ENCODE measurements at regions of chr6 and their contacts with region 1.

Region 1: DNA sequence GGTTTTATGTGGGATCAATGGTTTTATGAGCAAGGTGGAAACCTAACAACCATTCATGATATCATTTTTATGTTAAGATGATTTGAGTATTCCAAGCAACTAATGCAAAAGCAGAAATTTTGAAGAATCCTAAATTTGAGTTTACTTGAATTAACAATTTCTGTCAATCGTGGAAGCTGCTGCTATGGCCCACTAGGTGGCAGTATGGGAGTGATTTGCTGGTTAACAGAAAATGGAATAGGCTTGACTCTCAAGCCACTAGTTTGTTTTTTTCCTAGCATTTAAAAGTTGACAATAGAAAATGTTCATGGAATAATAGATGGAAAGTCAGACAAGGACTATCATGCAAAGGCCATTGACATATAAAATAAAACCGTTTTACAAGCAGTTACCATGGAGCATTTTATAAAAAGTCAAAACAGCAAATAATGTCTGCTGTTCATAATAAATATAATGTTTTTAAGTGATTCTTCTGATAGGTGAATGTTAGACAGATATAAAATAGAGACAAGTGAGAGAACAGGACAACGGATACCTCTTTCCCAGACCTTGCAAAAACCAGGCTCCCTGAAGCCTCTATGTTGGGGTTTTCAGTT is 43.0 kb upstream of the TMEM200A start:
- DNase-seq: peak; percentile 69
- H3K4me3 Mint-ChIP-seq: no peak overlapping the region
- H3K27ac Mint-ChIP-seq: no peak overlapping the region
- H3K4me1 Mint-ChIP-seq: no peaks in the 10 kb centered on the region
- H3K27me3 Mint-ChIP-seq: no peaks in the 10 kb centered on the region

Region 2: DNA sequence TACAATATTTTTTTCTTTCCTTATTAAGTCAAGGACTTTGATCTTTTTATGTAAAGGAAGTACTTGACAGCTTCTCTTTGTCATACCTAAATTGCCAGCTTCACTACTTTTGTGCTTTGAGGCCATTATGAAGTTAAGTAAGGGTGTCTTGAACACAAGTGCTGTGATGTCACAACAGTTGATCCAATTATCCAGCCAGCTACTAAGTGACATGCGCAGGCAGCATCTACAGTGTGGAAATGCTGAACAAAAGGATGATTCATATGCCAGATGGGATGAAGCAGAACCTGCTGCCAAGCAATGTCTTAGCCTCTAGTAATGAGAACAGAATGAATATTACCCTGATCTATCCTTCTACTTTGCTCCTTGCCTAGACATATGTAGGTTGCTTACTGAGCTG is 393.3 kb before region 1 on chr6:
- CTCF ChIA-PET with region 1: no interaction called
- intact Hi-C with region 1: no loop called
- DNase-seq: no peak
- H3K4me3 Mint-ChIP-seq: no peak overlapping the region
- H3K27ac Mint-ChIP-seq: no peak overlapping the region
- H3K4me1 Mint-ChIP-seq: no peaks in the 10 kb centered on the region
- H3K27me3 Mint-ChIP-seq: no peaks in the 10 kb centered on the region

Region 3: GRCh38 chr6:130027948-130028347 is 294.8 kb before region 1 on chr6:
- CTCF ChIA-PET with region 1: no interaction called
- intact Hi-C with region 1: no loop called
- DNase-seq: no peak
- H3K4me3 Mint-ChIP-seq: no peak overlapping the region
- H3K27ac Mint-ChIP-seq: peak overlapping the region; percentile 14
- H3K4me1 Mint-ChIP-seq: peaks cover 49% of the 10 kb centered on the region
- H3K27me3 Mint-ChIP-seq: no peaks in the 10 kb centered on the region

Region 4: DNA sequence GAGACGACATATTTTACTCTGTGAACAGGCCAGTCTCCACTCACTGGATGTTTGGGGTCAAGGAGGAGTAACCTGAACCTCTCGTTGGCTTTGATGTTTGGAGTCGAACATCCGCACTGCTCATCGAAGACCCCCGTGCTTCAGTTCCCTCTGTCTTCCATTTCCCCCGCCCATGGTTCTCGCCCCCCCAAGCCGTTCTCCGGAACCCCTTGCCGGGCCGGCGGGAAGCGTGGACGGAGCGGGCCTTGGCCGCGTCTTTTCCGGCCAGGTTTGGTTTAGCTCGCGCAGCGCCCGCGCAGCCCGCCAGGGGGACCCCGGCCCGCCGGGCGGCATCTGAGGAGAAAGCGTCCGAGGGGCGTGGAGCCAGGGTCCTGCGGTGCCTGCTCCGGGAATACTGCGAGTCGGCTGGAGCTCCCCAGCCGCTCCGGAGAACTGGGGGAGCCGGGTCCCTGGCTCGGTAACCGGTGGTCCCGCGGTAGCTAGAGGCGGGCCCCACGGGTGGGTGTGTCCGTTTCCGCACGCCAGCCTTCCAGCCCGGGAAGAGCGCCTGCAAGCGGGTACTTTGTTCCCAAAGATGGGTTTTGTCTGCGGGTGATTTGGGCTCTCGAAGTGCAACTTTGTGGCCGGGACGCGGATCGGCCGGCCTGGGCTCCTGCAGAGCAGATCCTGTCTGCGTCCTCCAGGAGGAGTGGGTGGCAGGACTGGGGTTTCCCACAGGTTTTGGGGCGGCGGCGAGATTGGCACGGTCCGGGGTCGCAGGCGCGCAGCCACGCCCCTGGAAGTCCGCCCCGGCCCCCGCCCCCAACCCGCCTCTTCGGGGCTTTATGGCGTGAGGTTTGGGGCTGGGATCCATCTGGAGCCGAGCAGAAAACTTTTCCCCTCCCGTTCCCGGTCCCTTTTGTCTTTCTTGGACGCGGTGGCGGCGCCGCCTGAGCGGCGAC is 42.7 kb after region 1 on chr6 and contains the start of gene TMEM200A:
- CTCF ChIA-PET with region 1: interaction called, 3 read pairs
- intact Hi-C with region 1: loop called (anchors 2 kb)
- DNase-seq: peak; percentile 31
- H3K4me3 Mint-ChIP-seq: peak within 1 kb of the TSS; percentile 70
- H3K27ac Mint-ChIP-seq: no peak within 1 kb of the TSS
- H3K4me1 Mint-ChIP-seq: peaks cover 14% of the 10 kb centered on the region
- H3K27me3 Mint-ChIP-seq: peaks cover 19% of the 10 kb centered on the region
- total RNA-seq, gene TMEM200A: not detected

Region 5: DNA sequence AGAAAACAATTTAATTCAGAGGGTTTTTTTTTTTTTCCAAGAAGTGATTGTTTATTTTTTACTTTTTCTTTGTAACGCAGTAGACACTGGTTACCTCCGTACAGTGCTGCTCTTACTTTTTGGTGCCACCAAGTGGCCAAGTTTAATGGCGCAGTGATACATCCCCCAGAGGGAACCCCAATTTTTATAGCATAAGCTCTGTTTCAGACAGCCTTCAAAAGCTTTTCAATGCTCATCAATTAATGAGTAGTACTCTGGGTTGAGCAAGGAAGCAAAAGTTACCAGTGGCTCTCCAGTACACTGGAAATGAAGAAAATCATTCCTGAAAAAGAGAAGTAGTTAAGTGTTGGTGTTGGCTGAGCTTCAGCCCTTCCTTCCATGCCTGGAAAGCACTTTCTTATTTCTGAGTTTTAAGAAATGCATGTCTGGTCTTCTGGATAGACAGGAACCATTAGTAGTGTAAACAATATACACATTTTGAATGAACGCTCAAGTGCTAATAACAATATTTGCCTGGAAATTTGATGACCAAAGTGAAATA is 375.3 kb after region 1 on chr6:
- CTCF ChIA-PET with region 1: interaction called, 22 read pairs
- intact Hi-C with region 1: loop called (anchors 1 kb)
- DNase-seq: peak; percentile 79
- H3K4me3 Mint-ChIP-seq: no peak overlapping the region
- H3K27ac Mint-ChIP-seq: no peak overlapping the region
- H3K4me1 Mint-ChIP-seq: peaks cover 19% of the 10 kb centered on the region
- H3K27me3 Mint-ChIP-seq: no peaks in the 10 kb centered on the region

Region 6: DNA sequence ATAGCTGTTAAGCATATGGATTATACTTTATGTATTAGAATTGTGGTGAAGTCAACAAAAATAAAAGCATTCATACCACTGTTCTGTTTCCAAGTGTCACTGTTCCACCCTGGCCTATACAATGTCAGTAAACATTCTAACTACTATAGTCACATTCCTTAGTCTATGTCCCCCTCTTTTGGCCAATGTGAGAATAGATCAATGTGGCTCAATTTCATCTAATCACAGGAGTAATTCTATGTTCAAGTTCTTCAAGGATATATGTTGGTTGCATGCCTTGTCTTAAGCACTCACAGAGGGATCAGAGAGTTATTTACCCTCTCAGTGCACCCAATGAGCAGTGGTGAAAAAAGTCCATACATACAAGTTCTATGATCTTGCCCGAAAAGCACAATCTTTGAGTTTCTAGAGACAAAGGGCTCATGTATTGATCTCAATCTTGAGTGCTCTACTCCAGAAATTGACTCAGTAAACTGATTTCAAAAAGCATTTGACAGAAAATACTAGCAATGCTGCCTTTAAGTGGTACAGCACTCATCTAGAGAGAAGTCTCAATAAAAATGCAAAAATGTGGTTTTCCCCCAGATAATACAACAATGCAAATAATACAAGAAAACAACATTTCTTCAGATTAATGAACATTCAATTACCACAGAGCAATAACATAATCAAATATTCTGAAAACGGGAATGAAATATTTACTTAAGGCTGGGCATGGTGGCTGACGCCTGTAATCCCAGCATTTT is 521.0 kb after region 1 on chr6:
- CTCF ChIA-PET with region 1: interaction called, 6 read pairs
- intact Hi-C with region 1: loop called (anchors 1 kb)
- DNase-seq: no peak
- H3K4me3 Mint-ChIP-seq: no peak overlapping the region
- H3K27ac Mint-ChIP-seq: no peak overlapping the region
- H3K4me1 Mint-ChIP-seq: peaks cover 2% of the 10 kb centered on the region
- H3K27me3 Mint-ChIP-seq: no peaks in the 10 kb centered on the region

Region 7: GRCh38 chr6:131116749-131117360 is 794.1 kb after region 1 on chr6:
- CTCF ChIA-PET with region 1: no interaction called
- intact Hi-C with region 1: loop called (anchors 5 kb)
- DNase-seq: no peak
- H3K4me3 Mint-ChIP-seq: no peak overlapping the region
- H3K27ac Mint-ChIP-seq: no peak overlapping the region
- H3K4me1 Mint-ChIP-seq: no peaks in the 10 kb centered on the region
- H3K27me3 Mint-ChIP-seq: no peaks in the 10 kb centered on the region